ENCODE measurements at regions of chr12 and their contacts with region 1.

Region 1: DNA sequence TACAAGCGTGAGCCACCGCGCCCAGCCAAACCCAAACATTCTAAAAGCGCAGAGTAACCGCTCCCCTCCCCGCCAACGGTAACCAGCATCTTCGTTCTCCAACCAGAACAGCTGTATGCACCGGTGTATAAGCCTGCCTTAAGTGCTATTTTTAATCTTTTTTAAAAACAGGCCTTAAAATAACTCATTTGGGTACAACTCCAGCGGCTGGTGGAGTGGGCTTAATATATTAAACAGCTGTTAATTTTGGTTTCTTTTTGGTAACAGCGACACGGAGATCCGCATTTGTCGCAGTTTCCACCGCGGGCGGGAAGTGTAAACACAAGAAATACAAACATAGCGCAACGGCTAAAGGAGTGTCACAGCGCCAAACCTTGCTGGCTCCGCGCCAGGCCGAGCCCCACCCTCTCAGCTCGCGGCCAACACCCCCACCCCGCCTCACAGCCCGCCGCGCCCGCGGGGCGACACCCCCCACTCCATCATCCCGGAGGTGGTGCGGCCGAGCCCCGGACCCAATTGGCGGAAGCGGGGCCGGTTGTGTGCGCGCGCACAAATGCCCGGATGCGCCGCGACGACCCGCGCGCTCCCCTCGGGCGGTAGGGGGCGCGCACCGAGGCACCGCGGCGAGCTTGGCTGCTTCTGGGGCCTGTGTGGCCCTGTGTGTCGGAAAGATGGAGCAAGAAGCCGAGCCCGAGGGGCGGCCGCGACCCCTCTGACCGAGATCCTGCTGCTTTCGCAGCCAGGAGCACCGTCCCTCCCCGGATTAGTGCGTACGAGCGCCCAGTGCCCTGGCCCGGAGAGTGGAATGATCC is at the start of gene MDM2:
- DNase-seq: peak; percentile 93 to 97
- ATAC-seq: peak; percentile 96 to 99 (median 96)
- H3K4me3 ChIP-seq: peak within 1 kb of the TSS; percentile 78 to 98 (median 92)
- H3K27ac ChIP-seq: peak within 1 kb of the TSS; percentile 95 to 100 (median 99)
- H3K4me1 ChIP-seq: peaks cover 3 to 47% (median 26%) of the 10 kb centered on the region in 9 donors
- H3K27me3 ChIP-seq: no peaks in the 10 kb centered on the region
- CTCF ChIP-seq: peak; percentile 79 to 97 (median 90)
- total RNA-seq, gene MDM2: 40.1 to 59.1 (median 47.1) TPM

Region 2: GRCh38 chr12:68331869-68332727 is 475.7 kb before region 1 on chr12 and contains the start of gene MDM1:
- intact Hi-C with region 1: loop called in 1 of 10 experiments (anchors 10 kb)
- DNase-seq: peak; percentile 96 to 99
- ATAC-seq: peak; percentile 99 to 100 (median 100)
- H3K4me3 ChIP-seq: peak within 1 kb of the TSS; percentile 69 to 88 (median 76)
- H3K27ac ChIP-seq: peak within 1 kb of the TSS in 9 of 10 donors; percentile 57 to 82 (median 69)
- H3K4me1 ChIP-seq: peaks cover 0 to 22% (median 14%) of the 10 kb centered on the region in 9 donors
- H3K27me3 ChIP-seq: no peaks in the 10 kb centered on the region
- CTCF ChIP-seq: no peak
- total RNA-seq, gene MDM1: 3.3 to 8.5 (median 6.2) TPM

Region 3: GRCh38 chr12:68727776-68728175 is 80.0 kb before region 1 on chr12:
- intact Hi-C with region 1: loop called in 1 of 10 experiments (anchors 10 kb)
- DNase-seq: no peak
- ATAC-seq: no peak
- H3K4me3 ChIP-seq: no peak overlapping the region
- H3K27ac ChIP-seq: no peak overlapping the region
- H3K4me1 ChIP-seq: no peaks in the 10 kb centered on the region
- H3K27me3 ChIP-seq: no peaks in the 10 kb centered on the region
- CTCF ChIP-seq: no peak

Region 4: GRCh38 chr12:68745904-68746571 is 61.7 kb before region 1 on chr12 and contains the start of gene SLC35E3:
- intact Hi-C with region 1: loop called in 6 of 10 experiments (anchors 1 to 10 kb)
- DNase-seq: peak; percentile 91 to 94
- ATAC-seq: peak; percentile 100
- H3K4me3 ChIP-seq: peak within 1 kb of the TSS; percentile 62 to 88 (median 72)
- H3K27ac ChIP-seq: peak within 1 kb of the TSS; percentile 41 to 89 (median 79)
- H3K4me1 ChIP-seq: peaks cover 0 to 29% (median 17%) of the 10 kb centered on the region in 9 donors
- H3K27me3 ChIP-seq: no peaks in the 10 kb centered on the region
- CTCF ChIP-seq: no peak
- total RNA-seq, gene SLC35E3: 4.3 to 8.9 (median 6.6) TPM

Region 5: GRCh38 chr12:68759852-68760251 is 47.9 kb before region 1 on chr12:
- intact Hi-C with region 1: loop called in 1 of 10 experiments (anchors 5 kb)
- DNase-seq: no peak
- ATAC-seq: no peak
- H3K4me3 ChIP-seq: no peak overlapping the region
- H3K27ac ChIP-seq: no peak overlapping the region
- H3K4me1 ChIP-seq: no peaks in the 10 kb centered on the region
- H3K27me3 ChIP-seq: no peaks in the 10 kb centered on the region
- CTCF ChIP-seq: no peak